Natural killer cell (primary cell): ENCODE measurements at regions of chr21 and their contacts with region 1.

Region 1: GRCh38 chr21:43741425-43742096 is 22.6 kb downstream of the PDXK start:
- DNase-seq: no peak
- ATAC-seq: no peak
- H3K4me3 ChIP-seq: no peak overlapping the region
- H3K4me3 Mint-ChIP-seq: no peak overlapping the region
- H3K27ac ChIP-seq: no peak overlapping the region
- H3K27ac Mint-ChIP-seq: no peak overlapping the region
- H3K4me1 ChIP-seq: peaks cover 15% of the 10 kb centered on the region
- H3K4me1 Mint-ChIP-seq: peaks cover 9 to 10% of the 10 kb centered on the region in 2 donors
- H3K27me3 ChIP-seq: no peaks in the 10 kb centered on the region
- H3K27me3 Mint-ChIP-seq: no peaks in the 10 kb centered on the region
- CTCF ChIP-seq: no peak

Region 2: GRCh38 chr21:43762303-43763128 is 21.0 kb after region 1 on chr21:
- intact Hi-C with region 1: loop called (anchors 2 kb)
- DNase-seq: no peak
- ATAC-seq: no peak
- H3K4me3 ChIP-seq: no peak overlapping the region
- H3K4me3 Mint-ChIP-seq: no peak overlapping the region
- H3K27ac ChIP-seq: no peak overlapping the region
- H3K27ac Mint-ChIP-seq: no peak overlapping the region
- H3K4me1 ChIP-seq: no peaks in the 10 kb centered on the region
- H3K4me1 Mint-ChIP-seq: no peaks in the 10 kb centered on the region
- H3K27me3 ChIP-seq: no peaks in the 10 kb centered on the region
- H3K27me3 Mint-ChIP-seq: no peaks in the 10 kb centered on the region
- CTCF ChIP-seq: no peak

Region 3: DNA sequence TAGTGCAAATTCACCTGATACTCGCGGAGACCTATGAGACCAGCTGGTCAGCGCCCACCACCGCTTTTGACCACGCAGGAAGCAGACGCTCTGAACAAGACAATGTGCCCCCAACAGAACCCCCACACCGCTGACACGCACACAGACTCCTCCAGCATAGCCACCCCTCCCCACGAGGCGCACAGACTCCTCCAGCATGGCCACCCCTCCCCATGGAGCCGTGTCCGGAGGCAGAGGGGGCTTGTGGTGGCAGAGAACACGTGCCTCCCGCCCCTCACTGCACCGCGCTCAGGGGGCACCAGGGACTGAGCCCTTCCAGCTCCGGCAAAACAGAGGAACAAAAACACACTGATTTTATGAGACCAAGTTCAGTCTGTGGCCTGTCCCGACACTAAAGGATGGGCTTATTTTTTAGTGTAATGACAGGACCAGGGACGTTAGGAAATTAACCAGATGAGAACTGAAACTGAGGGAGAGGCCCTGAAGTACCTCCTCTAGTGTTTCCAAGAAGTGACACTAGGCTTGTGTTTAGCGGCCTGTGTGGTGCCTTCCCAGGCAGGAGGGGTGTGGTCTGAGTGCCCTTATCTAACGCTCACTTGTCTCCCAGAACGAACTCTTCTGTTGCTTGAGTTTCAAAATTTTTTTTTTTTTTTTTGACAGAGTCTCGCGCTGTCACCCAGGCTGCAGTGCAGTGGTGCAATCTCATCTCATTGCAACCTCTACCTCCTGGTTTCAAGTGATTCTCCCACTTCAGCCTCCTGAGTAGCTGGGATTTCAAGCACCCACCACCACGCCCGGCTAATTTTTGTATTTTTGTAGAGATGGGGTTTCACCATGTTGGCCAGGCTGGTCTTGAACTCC is 113.4 kb after region 1 on chr21:
- intact Hi-C with region 1: no loop called
- DNase-seq: peak in 1 of 2 donors; percentile 19
- ATAC-seq: no peak
- H3K4me3 ChIP-seq: no peak overlapping the region
- H3K4me3 Mint-ChIP-seq: no peak overlapping the region
- H3K27ac ChIP-seq: peak overlapping the region; percentile 18
- H3K27ac Mint-ChIP-seq: no peak overlapping the region
- H3K4me1 ChIP-seq: peaks cover 19% of the 10 kb centered on the region
- H3K4me1 Mint-ChIP-seq: peaks cover 0 to 7% of the 10 kb centered on the region in 2 donors
- H3K27me3 ChIP-seq: no peaks in the 10 kb centered on the region
- H3K27me3 Mint-ChIP-seq: peaks cover 13 to 31% of the 10 kb centered on the region in 2 donors
- CTCF ChIP-seq: no peak